Activated CD8-positive, alpha-beta T cell treated with anti-CD3 and anti-CD28 coated beads for 36 hours (primary cell): ENCODE measurements at regions of chr1 and their contacts with region 1.

Region 1: GRCh38 chr1:30085811-30086770 is 637.3 kb downstream of the MATN1 start:
- DNase-seq: peak; percentile 61
- ATAC-seq: peak; percentile 45
- H3K4me3 Mint-ChIP-seq: no peak overlapping the region
- H3K27ac Mint-ChIP-seq: no peak overlapping the region
- H3K4me1 Mint-ChIP-seq: no peaks in the 10 kb centered on the region
- H3K27me3 Mint-ChIP-seq: peaks cover 30% of the 10 kb centered on the region
- CTCF ChIP-seq: peak; percentile 70

Region 2: DNA sequence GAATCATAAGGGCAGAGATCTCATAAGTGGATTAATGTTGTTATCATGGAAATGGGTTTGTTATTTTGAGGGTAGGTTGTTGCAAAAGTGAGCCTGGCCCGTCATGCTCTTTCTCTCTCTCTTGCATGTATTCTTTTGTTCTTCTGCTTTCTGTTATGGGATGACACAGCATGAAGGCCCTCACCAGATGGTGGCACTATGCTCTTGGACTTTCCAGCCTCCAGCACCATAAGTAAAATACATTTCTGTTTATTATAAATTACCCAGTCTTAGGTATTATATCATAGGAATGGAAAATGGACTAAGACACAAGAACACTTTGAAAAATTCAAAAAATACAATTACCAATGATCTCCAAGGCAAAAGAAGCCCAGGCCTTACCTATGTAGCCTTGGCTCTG is 173.7 kb before region 1 on chr1:
- CTCF ChIA-PET with region 1: no interaction called
- POLR2A ChIA-PET with region 1: no interaction called
- intact Hi-C with region 1: loop called (anchors 10 kb)
- DNase-seq: peak; percentile 23
- ATAC-seq: no peak
- H3K4me3 Mint-ChIP-seq: no peak overlapping the region
- H3K27ac Mint-ChIP-seq: no peak overlapping the region
- H3K4me1 Mint-ChIP-seq: no peaks in the 10 kb centered on the region
- H3K27me3 Mint-ChIP-seq: peaks cover 17% of the 10 kb centered on the region
- CTCF ChIP-seq: no peak